ENCODE measurements at regions of chr17 and their contacts with region 1.

Region 1: DNA sequence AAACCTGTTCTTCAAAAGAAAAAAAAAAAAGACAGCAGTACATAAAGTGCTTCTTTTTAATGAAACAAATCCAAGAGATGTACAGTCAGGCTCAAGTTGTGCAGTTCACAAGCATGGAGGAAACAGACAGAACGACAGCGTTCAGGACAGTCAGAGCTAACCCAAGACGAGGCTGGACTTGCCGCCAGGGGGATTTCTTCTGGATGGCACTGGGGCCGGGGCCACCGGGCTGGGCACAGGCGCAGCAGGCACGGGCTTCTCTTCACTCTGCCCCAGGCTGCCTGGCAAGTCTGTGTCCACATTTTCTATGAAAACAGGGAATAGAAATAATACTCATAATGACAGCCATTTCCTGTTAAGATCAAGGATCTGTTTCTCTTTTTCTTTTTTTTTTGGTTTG is 4.4 kb upstream of the NT5C start:
- DNase-seq: no peak
- H3K4me3 ChIP-seq: no peak overlapping the region
- CTCF ChIP-seq: no peak

Region 2: DNA sequence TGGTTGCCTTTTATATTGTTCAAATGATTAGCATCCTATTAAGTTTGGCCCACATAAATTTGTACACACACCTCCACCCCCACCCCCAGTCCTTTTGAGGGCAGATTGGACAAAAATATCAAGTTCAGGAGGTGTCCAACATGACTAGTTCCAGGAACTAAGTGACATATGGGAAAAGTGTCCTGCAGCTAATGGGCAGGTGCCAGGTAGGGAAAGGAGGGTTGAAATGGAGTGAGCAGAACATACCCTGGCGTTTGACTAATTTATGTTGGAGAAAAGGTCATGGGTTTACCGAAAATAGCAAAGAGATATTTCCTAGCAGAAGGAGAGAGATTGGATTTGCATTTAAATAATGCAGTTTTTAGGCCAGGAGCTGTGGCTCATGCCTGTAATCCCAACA is 84.0 kb before region 1 on chr17:
- in situ Hi-C with region 1: loop called (anchors 5 kb)
- DNase-seq: no peak
- H3K4me3 ChIP-seq: no peak overlapping the region
- CTCF ChIP-seq: no peak